Posterior cingulate gyrus (tissue), 11 donors: ENCODE measurements at regions of chr3 and their contacts with region 1.

Region 1: DNA sequence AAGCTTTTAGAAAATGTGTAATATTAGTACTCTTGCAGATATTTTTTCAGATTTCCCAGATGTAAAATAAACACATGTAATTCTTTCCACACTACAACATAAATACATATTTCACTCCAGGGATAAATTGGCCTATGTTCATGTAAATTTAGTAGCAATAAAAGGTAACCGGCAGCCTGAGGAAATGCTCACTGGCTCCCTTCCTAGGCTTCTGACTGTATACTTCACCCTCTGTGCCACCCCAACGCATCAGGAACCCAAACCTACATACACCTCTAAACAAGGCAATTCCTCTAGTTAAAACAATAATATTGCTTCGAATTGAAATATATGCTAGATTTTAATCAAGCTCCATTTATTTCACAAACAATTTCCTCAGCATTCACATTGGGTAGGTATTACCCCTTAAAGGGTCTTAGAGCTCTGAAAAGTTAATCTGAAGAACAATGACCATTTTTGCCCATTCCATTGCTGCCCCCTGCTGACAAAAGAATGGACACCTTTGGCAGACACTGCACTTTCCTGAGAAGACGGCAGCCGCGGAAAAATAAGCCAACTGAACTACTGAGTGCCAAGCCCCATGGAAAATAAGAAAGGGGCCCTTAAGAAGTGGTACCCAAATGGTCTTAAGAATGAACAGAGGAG is 212.5 kb downstream of the OSBPL10 start:
- DNase-seq: peak in 7 of 10 donors; percentile 28 to 89 (median 56)

Region 2: DNA sequence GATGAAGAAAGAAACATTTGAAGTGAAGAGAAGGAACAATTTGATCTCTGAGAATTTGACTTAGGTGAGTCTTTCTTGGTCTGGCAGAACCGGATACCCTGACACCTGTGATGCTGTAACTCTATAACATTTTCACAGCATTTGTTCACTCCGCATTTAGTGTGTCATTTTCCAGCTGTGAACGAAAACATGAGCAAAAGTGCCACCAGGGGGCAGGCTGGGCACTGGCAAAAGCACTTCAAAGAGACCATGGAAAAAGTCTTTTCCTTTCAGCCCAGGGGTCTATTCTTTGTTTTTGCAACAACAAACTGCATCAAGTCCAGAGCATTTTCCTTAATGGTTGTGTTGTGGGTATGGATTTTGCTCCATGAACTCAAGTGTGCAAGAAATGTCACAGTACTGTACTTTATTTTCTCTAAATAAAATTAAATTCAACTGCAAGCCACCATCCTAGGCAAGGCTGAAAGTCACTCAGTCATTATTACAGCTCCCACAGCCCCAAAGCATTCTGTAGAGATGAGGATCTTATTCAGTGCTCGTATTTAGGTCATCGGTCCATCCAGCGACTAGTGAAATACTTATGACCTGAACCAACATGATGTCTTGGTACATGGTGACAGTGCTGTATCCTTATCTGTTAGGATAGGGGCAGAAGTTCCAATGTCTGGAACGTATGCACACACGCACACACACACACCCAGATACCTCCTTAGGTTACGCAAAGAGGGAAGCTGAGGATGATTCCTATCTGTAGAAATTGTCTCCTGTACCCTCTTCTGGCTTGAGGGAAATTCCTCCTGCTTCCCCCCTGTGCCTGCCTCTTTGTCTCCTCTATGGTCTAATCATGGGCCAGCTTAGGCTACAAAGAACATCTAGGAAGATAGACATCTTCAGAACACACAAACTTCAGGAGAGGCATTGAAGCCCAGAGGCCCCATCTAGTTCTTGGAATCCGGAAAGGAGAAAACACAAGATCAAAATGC is 999.6 kb before region 1 on chr3:
- intact Hi-C with region 1: loop called (anchors 5 kb)
- DNase-seq: peak; percentile 30 to 93 (median 74)

Region 3: GRCh38 chr3:31550452-31551251 is 217.9 kb before region 1 on chr3:
- intact Hi-C with region 1: loop called (anchors 1 kb)
- DNase-seq: no peak

Region 4: GRCh38 chr3:31610700-31611275 is 157.8 kb before region 1 on chr3:
- intact Hi-C with region 1: loop called (anchors 5 kb)
- DNase-seq: peak in 1 of 10 donors; percentile 13

Region 5: GRCh38 chr3:31802981-31803740 is 34.6 kb after region 1 on chr3:
- intact Hi-C with region 1: no loop called
- DNase-seq: no peak

Region 6: GRCh38 chr3:31831598-31831997 is 63.0 kb after region 1 on chr3:
- intact Hi-C with region 1: no loop called
- DNase-seq: no peak